BJ (cell line): ENCODE measurements at regions of chr9 and their contacts with region 1.

Region 1: GRCh38 chr9:92342825-92343488 is 17.2 kb downstream of the CENPP start:
- DNase-seq: no peak
- H3K4me3 ChIP-seq: no peak overlapping the region
- H3K27me3 ChIP-seq: no peaks in the 10 kb centered on the region
- CTCF ChIP-seq: peak; percentile 26; the same call in 1 of the 2 replicates

Region 2: DNA sequence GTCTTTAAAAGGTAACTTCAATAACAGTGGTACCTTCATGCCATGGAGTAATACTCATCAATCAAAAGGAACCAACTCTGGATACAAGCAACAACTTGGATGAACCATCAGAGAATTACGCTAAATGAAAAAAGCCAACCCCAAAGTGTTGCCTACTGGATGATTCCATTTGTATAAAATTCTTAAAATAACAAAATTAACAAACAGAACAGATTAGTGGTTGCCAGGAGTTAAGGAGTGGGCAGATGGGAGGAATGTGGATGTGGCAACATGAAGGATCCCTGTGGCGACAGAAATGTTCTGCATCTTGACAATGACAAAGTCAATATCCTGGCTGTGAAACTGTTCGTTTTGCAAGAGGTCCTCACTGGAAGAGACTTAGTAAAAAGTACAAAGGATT is 278.2 kb before region 1 on chr9:
- CTCF ChIA-PET with region 1: no interaction called
- POLR2A ChIA-PET with region 1: no interaction called
- DNase-seq: no peak
- H3K4me3 ChIP-seq: no peak overlapping the region
- H3K27me3 ChIP-seq: no peaks in the 10 kb centered on the region
- CTCF ChIP-seq: no peak

Region 3: GRCh38 chr9:92438900-92439526 is 96.1 kb after region 1 on chr9:
- CTCF ChIA-PET with region 1: interaction called, 19 read pairs
- POLR2A ChIA-PET with region 1: no interaction called
- DNase-seq: no peak
- H3K4me3 ChIP-seq: no peak overlapping the region
- H3K27me3 ChIP-seq: no peaks in the 10 kb centered on the region
- CTCF ChIP-seq: peak; percentile 21; the same call in 1 of the 2 replicates